ENCODE measurements at regions of chr12 and their contacts with region 1.

Region 1: GRCh38 chr12:98516184-98516873 is 939 bp downstream of the TMPO start:
- DNase-seq: peak; percentile 74 to 91 (median 85)
- H3K4me3 ChIP-seq: peak overlapping the region; percentile 89
- H3K4me3 Mint-ChIP-seq: peak overlapping the region; percentile 95 to 100 (median 99)
- H3K27ac ChIP-seq: peak overlapping the region; percentile 89
- H3K27ac Mint-ChIP-seq: peak overlapping the region; percentile 96 to 99 (median 98)
- H3K4me1 ChIP-seq: peaks cover 51% of the 10 kb centered on the region
- H3K4me1 Mint-ChIP-seq: peaks cover 44 to 70% (median 68%) of the 10 kb centered on the region in 3 donors
- H3K27me3 ChIP-seq: no peaks in the 10 kb centered on the region
- H3K27me3 Mint-ChIP-seq: peaks cover 0 to 5% of the 10 kb centered on the region in 2 donors

Region 2: DNA sequence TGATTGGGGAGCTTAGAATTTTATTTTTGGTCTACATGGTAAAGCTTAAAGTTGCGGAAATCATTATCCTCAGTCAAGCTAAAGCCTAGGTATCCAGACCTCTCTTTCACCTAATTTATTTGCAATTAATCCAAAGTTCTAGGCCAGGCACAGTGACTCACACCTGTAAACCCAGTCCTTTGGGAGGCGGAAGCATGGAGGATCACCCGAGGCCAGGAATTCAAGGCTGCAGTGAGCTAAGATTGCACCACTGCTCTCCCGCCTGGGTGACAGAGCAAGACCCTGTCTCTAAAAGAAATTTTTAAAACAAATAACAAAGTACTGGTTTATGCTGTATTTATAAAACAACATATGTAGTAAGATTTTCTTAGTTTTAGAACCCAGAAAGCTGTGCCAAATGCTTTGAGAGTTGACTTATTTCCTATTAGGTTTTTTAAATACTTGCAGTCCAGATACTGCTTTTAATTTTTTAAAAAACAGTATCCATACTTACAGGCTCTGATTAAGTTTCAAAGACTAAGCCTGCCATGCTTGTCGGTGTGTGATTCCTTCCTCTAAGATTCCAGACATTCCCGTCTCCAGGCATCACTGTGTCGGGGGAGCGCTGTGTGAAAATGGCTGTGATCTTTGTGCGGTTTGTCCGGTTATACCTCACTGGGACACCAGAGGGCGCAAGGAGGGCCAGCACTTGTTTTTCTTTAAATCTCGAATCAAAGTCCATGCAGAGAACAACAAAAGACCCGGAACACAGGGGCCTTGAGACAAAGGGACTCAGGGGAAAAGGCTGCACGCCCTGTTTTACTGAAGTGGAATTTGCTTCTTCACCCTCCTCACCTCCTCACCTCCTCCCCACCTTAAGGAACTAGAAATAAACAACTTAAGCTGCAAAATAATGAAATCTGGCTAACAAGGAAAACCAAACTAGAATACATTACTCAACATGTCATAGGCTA is 25.6 kb before region 1 on chr12:
- CTCF ChIA-PET with region 1: interaction called, 231 read pairs
- POLR2A ChIA-PET with region 1: interaction called, 46 read pairs
- DNase-seq: peak; percentile 73 to 87 (median 76)
- H3K4me3 ChIP-seq: no peak overlapping the region
- H3K4me3 Mint-ChIP-seq: peak overlapping the region in 4 of 7 donors; percentile 3 to 71 (median 31)
- H3K27ac ChIP-seq: no peak overlapping the region
- H3K27ac Mint-ChIP-seq: peak overlapping the region; percentile 9 to 91 (median 83)
- H3K4me1 ChIP-seq: no peaks in the 10 kb centered on the region
- H3K4me1 Mint-ChIP-seq: peaks cover 5 to 11% (median 7%) of the 10 kb centered on the region in 3 donors
- H3K27me3 ChIP-seq: no peaks in the 10 kb centered on the region
- H3K27me3 Mint-ChIP-seq: peaks cover 0 to 2% of the 10 kb centered on the region in 2 donors

Region 3: DNA sequence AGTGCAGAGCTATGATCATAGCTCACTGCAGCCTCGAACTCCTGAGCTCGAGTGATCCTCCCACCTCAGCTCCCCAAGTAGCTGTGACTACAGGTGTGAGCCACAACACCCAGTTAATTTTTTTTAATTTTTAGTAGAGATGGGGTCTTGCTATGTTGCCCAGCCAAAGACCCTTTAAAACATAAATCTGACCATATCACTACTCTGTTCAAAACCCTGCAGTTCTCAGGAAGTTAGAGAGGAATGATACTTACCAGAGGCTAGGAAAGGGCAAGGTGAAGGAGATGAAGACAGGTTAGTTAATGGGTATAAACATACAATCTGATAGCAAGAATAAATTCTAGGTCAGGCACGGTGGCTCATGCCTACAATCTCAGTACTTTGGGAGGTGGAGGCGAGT is 17.7 kb before region 1 on chr12:
- CTCF ChIA-PET with region 1: interaction called, 231 read pairs
- POLR2A ChIA-PET with region 1: interaction called, 53 read pairs
- DNase-seq: no peak
- H3K4me3 ChIP-seq: no peak overlapping the region
- H3K4me3 Mint-ChIP-seq: no peak overlapping the region
- H3K27ac ChIP-seq: no peak overlapping the region
- H3K27ac Mint-ChIP-seq: peak overlapping the region in 1 of 8 donors; percentile 48
- H3K4me1 ChIP-seq: no peaks in the 10 kb centered on the region
- H3K4me1 Mint-ChIP-seq: peaks cover 7 to 13% (median 8%) of the 10 kb centered on the region in 3 donors
- H3K27me3 ChIP-seq: no peaks in the 10 kb centered on the region
- H3K27me3 Mint-ChIP-seq: peaks cover 0 to 9% of the 10 kb centered on the region in 2 donors

Region 4: GRCh38 chr12:98503592-98504367 is 12.5 kb before region 1 on chr12:
- CTCF ChIA-PET with region 1: interaction called, 37 read pairs
- POLR2A ChIA-PET with region 1: interaction called, 53 read pairs
- DNase-seq: peak; percentile 87 to 97 (median 92)
- H3K4me3 ChIP-seq: peak overlapping the region; percentile 97
- H3K4me3 Mint-ChIP-seq: peak overlapping the region; percentile 93 to 99 (median 98)
- H3K27ac ChIP-seq: peak overlapping the region; percentile 94
- H3K27ac Mint-ChIP-seq: peak overlapping the region; percentile 97 to 100 (median 98)
- H3K4me1 ChIP-seq: peaks cover 8% of the 10 kb centered on the region
- H3K4me1 Mint-ChIP-seq: peaks cover 23 to 35% (median 29%) of the 10 kb centered on the region in 3 donors
- H3K27me3 ChIP-seq: no peaks in the 10 kb centered on the region
- H3K27me3 Mint-ChIP-seq: peaks cover 3 to 16% of the 10 kb centered on the region in 2 donors

Region 5: DNA sequence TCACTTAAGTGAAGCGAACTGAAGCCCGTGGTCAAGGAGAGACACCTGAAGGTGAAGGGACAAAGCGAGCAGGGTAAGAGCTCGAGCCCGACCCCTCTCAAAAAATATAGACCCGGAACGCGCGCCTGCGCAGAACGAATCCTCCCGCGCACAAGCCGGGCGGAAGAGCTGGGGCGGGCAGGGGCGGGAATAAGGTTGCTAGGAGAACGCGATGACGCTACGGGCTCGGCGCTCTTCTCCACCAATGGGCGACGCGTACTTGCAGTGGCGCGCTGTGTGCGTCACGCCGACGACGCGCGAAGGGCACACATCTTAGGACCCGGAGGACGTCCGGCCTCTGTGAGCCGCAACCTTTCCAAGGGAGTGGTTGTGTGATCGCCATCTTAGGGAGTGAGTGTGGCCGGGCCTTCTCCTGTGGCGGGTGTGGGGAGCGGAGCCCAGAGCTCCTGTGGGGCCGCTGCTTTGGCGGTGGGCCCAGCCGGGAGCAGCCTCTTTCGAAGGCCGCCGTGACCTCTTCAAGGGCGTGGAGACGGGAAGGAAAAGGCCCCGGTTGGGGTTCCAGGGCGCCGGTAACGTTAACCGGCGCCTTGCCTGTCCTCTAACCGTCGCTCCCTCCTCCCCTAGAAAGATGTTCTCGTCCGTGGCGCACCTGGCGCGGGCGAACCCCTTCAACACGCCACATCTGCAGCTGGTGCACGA is 77.2 kb after region 1 on chr12 and contains the start of gene SLC25A3:
- CTCF ChIA-PET with region 1: interaction called, 18 read pairs
- POLR2A ChIA-PET with region 1: interaction called, 38 read pairs
- DNase-seq: peak; percentile 91 to 97 (median 94)
- H3K4me3 ChIP-seq: peak within 1 kb of the TSS; percentile 84
- H3K4me3 Mint-ChIP-seq: peak within 1 kb of the TSS; percentile 90 to 100 (median 95)
- H3K27ac ChIP-seq: peak within 1 kb of the TSS; percentile 98
- H3K27ac Mint-ChIP-seq: peak within 1 kb of the TSS; percentile 94 to 100 (median 97)
- H3K4me1 ChIP-seq: peaks cover 37% of the 10 kb centered on the region
- H3K4me1 Mint-ChIP-seq: peaks cover 38 to 47% (median 40%) of the 10 kb centered on the region in 3 donors
- H3K27me3 ChIP-seq: no peaks in the 10 kb centered on the region
- H3K27me3 Mint-ChIP-seq: no peaks in the 10 kb centered on the region
- total RNA-seq, gene SLC25A3: 668 to 674 TPM

Measured in CD8-positive, alpha-beta memory T cell (primary cell).